ENCODE measurements at regions of chr2 and their contacts with region 1.

Region 1: DNA sequence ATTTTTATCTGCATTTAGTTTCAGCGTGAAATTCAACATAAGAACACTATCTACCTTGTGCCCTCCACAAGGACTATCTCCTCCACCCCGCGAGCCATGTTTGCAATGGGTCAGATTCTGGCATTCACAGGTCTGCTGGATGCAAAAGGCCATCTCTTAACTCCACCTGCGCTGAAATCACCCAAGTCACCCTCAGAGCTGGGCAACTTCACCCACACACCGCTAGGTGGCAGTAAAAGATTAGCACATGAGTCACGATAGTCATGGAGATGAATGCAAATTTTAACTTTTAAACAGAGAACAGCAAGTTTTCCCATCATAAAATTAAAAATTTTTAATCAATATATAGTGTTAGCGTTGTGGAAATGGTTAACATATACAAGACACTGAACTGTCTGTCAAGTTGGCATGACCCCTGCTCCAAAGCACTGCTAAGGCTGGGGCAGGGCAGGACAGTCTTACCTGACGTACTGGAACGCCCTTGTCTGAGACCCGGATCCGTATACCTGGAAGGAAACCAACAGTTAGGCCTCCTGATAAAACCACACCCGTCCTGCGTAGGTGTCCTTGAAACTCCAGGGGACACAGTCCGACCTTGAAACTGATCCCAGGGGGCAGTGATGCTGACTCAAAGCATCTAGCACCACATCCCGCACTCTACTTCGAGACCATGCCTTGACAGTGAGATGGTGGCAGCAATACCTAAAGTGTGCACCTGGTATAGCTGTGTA is 89.6 kb downstream of the UXS1 start:
- DNase-seq: peak in 1 of 2 donors; percentile 45
- ATAC-seq: peak in 5 of 8 donors; percentile 28 to 66 (median 55)
- H3K4me3 ChIP-seq: no peak overlapping the region
- H3K27ac ChIP-seq: no peak overlapping the region
- H3K4me1 ChIP-seq: peaks cover 0 to 22% (median 14%) of the 10 kb centered on the region in 9 donors
- H3K27me3 ChIP-seq: no peaks in the 10 kb centered on the region
- CTCF ChIP-seq: peak; percentile 86 to 98 (median 94)

Region 2: DNA sequence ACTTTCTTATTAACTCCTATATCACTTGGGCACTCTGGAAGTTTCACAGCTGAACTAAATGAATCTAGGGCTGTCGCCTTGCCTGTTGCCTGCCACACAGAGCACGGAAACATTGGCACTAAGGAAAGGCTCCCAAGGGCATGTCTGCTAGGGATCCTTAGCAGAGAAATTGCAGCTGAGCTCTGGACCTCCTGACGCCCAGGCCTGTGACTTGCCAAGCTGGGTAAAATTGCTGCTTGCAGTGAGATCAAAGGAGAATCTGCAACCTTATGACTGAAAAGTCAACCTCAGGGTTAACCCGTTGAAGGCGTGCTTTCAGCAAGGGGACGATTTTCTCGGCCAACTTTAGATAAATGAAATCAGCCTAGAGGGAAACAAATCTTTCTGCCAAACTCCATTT is 170.0 kb before region 1 on chr2:
- intact Hi-C with region 1: no loop called
- DNase-seq: no peak
- ATAC-seq: peak in 2 of 8 donors; percentile 38 to 59
- H3K4me3 ChIP-seq: no peak overlapping the region
- H3K27ac ChIP-seq: peak overlapping the region in 1 of 10 donors; percentile 6
- H3K4me1 ChIP-seq: peaks cover 0 to 23% (median 10%) of the 10 kb centered on the region in 9 donors
- H3K27me3 ChIP-seq: no peaks in the 10 kb centered on the region
- CTCF ChIP-seq: no peak

Region 3: DNA sequence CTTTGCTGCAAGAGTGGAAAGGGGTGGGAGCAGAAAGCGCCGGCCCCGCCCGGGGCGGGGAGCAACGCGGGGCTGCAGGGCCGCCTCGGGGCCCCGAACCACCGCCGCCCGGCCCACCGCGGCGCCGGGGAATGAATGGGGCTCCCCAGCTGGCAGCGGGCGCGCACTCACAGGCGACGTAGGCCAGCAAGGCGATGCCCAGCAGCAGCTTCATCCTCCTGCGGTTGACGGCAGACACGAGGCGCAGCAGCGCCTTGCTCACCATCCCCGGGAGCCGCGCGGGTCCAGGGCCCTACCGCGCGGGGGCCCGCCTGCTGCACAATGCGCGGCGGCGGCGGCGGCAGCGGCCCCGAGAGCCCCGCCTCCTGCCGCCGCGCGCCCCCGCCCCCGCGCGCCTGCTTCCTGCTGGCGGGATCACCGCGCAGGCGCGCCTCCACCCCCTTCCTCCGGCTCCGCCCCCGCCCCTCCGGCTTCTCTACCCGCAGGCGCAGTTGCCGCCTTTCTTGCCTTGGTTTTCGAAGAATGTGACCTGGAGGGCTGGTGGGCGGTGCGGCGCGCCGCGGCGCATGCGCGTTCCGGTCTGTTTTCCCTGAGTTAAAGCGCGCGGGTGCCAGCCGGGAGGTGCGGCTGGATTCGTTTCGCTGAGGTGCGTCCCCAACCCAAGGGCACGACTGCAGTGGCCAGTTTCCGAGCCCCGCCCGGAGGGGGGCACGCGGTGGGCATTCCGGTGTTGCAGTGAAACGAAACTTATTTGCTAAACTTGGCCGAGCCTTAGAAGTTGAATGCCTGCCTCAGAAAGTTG is 89.7 kb after region 1 on chr2 and contains the start of gene UXS1:
- intact Hi-C with region 1: loop called in 2 of 10 experiments (anchors 5 kb)
- DNase-seq: peak; percentile 97 to 99
- ATAC-seq: peak; percentile 92 to 99 (median 97)
- H3K4me3 ChIP-seq: peak within 1 kb of the TSS; percentile 73 to 98 (median 95)
- H3K27ac ChIP-seq: peak within 1 kb of the TSS; percentile 49 to 94 (median 88)
- H3K4me1 ChIP-seq: peaks cover 2 to 45% (median 17%) of the 10 kb centered on the region in 9 donors
- H3K27me3 ChIP-seq: no peaks in the 10 kb centered on the region
- CTCF ChIP-seq: no peak
- total RNA-seq, gene UXS1: 22.0 to 35.0 (median 25.9) TPM

Region 4: GRCh38 chr2:106232638-106233349 is 128.3 kb after region 1 on chr2:
- intact Hi-C with region 1: no loop called
- DNase-seq: peak; percentile 30 to 70
- ATAC-seq: peak; percentile 90 to 99 (median 96)
- H3K4me3 ChIP-seq: no peak overlapping the region
- H3K27ac ChIP-seq: no peak overlapping the region
- H3K4me1 ChIP-seq: peaks cover 0 to 2% (median 0%) of the 10 kb centered on the region in 9 donors
- H3K27me3 ChIP-seq: no peaks in the 10 kb centered on the region
- CTCF ChIP-seq: no peak

Region 5: DNA sequence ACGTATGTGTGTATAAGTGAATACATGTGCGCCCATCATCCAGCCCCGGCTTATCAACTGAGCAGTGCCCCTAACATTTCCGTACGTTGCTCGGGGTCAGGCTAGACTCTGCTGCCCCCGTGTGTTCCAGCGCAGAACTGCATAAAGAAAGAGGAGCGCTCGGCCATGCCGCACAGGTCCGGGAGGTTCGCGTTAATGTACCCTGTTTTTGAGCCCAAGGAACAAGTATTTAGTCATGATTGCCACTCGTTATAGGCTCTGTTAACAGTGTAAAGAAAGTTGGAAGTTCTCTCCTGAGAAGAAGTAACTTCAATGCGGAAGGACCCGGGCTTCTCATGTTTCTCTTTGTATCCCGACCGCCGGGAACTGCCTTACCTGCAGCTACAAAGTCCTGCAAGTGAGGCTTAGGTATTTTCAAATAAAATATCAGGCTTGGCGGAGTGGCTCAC is 438.3 kb after region 1 on chr2:
- intact Hi-C with region 1: loop called in 9 of 10 experiments (anchors 2 to 10 kb)
- DNase-seq: peak; percentile 60 to 65
- ATAC-seq: peak; percentile 57 to 88 (median 74)
- H3K4me3 ChIP-seq: peak overlapping the region in 6 of 10 donors; percentile 4 to 46 (median 27)
- H3K27ac ChIP-seq: no peak overlapping the region
- H3K4me1 ChIP-seq: peaks cover 0 to 22% (median 3%) of the 10 kb centered on the region in 9 donors
- H3K27me3 ChIP-seq: peaks cover 0 to 37% (median 17%) of the 10 kb centered on the region in 7 donors
- CTCF ChIP-seq: peak; percentile 72 to 99 (median 94)

Region 6: GRCh38 chr2:106572541-106573450 is 468.3 kb after region 1 on chr2:
- intact Hi-C with region 1: loop called in 1 of 10 experiments (anchors 10 kb)
- DNase-seq: no peak
- ATAC-seq: no peak
- H3K4me3 ChIP-seq: no peak overlapping the region
- H3K27ac ChIP-seq: no peak overlapping the region
- H3K4me1 ChIP-seq: peaks cover 0 to 17% (median 10%) of the 10 kb centered on the region in 9 donors
- H3K27me3 ChIP-seq: no peaks in the 10 kb centered on the region
- CTCF ChIP-seq: peak in 8 of 9 donors; percentile 9 to 56 (median 41)

Region 7: DNA sequence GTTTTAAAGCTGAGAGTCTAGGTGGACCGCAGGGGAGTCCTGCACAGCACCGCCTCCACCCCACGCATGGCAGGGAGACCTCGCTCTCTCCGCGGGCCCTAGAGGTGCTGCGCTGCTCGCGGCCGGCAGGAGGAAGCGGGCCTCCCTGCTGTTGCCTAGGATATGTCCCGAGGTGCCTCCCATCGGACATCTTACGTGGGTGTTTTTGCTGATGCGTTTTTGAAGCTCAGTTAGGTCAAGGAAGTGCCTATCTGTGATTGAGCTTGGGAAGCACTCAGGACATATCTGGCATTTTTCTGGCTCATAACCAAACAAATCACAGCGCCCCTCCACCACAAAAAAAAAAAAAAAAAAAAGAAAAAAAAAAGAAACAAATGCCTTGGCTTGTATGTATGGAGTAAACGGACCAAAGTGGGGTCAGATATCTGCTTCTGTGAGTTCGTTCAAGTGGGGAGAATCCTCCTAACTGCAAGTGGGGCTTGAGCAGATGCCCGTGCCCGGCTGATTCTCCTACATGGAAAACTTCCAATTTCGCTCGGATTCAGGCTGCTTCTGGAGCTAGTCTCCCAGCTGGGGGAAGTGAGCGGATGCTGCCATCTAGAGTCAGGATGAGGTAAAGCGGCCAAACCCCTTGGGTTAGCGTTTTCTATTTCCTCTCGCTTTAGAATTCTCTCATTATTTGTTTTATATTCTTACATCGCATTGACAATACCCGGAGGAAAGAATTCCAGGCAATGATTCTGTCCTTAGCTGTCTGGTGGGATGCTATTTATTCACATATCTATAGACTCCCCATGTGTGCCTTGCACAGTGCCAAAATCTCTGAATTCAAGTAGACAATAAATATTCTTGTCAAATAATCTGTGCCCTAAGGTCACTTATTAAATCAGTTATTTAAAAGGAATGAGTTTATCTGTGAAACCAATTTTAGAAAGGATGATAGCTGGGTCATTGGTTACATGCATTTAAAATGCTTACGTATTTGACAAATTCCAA is 477.9 kb after region 1 on chr2:
- intact Hi-C with region 1: loop called in 7 of 10 experiments (anchors 5 to 10 kb)
- DNase-seq: peak; percentile 59 to 77
- ATAC-seq: peak; percentile 77 to 90 (median 82)
- H3K4me3 ChIP-seq: peak overlapping the region in 9 of 10 donors; percentile 10 to 47 (median 37)
- H3K27ac ChIP-seq: no peak overlapping the region
- H3K4me1 ChIP-seq: peaks cover 0 to 18% (median 7%) of the 10 kb centered on the region in 9 donors
- H3K27me3 ChIP-seq: peaks cover 0 to 45% (median 22%) of the 10 kb centered on the region in 7 donors
- CTCF ChIP-seq: peak; percentile 71 to 88 (median 84)

Region 8: DNA sequence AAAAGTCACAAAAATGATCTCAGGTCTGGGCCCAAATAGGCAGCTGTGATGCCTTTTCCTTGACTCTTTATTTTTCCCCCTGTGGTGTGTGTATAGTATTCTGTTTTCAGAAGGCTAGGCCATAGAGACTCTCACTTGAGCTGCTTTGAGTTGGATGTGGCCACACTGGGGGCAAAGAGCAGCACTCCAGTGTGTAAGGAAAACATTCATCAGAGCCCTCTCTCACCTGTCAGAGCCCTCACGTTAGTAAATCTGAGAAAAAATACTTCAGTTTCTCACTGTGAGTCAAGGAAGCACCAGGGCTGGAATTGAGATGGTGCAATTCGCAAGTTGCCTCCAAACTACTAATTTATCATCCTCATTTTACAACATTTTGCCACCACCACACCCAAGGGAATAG is 645.3 kb after region 1 on chr2:
- intact Hi-C with region 1: no loop called
- DNase-seq: no peak
- ATAC-seq: no peak
- H3K4me3 ChIP-seq: no peak overlapping the region
- H3K27ac ChIP-seq: no peak overlapping the region
- H3K4me1 ChIP-seq: no peaks in the 10 kb centered on the region
- H3K27me3 ChIP-seq: no peaks in the 10 kb centered on the region
- CTCF ChIP-seq: no peak

Measured in heart right ventricle (tissue), 16 donors.